ENCODE measurements at regions of chr6 and their contacts with region 1.

Region 1: DNA sequence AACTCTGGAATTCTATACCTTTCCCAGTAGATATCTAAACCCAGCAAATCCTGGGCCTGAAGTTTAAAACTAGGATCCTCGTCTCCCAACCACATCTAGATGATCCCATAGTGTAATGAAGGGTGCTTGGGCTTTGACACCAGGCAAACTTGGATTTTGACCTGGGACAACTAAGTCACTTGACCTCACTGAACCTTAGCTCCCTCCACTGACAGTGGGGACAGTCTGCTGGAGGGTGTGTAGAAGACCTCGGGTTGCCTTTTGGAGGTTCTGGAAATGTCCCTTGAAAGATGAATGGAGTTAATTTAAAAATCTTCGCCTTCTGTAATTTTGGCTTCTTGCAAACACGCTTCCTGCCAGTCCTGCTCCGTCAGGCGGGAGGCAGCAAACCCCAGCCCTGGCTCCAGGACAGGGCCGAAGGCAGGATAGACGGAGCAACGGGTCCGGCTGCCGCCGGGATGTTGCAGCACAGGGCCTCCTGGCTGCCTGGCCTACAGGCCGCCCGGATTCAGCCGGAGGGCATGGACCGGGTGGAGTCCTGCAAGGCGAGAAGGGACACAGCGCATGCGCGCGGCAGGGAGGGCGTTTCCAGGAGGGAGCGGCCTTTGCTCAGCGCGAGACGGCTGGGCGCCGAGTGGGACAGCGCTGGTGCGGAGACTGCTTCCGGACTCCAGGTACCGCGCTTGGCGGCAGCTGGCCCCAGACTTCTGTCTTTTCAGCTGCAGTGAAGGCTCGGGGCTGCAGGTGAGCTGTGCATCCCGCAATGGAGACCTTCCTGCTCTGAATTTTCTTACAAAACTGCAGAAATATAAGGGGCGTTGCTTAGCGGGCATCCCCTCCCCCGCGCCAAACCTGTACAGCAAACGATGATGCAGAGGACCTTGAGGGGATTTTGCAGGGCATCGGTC is at the start of gene TMEM14A:
- DNase-seq: peak; percentile 86 to 97 (median 92)
- H3K4me3 ChIP-seq: peak within 1 kb of the TSS; percentile 53 to 96 (median 77)
- H3K27ac ChIP-seq: peak within 1 kb of the TSS in 55 of 59 donors; percentile 35 to 90 (median 76)
- H3K27me3 ChIP-seq: no peaks in the 10 kb centered on the region
- CTCF ChIP-seq: peak in 42 of 56 donors; percentile 3 to 64 (median 40)
- total RNA-seq, gene TMEM14A: 22.8 to 85.5 (median 63.7) TPM

Region 2: GRCh38 chr6:53064726-53065215 is 394.0 kb after region 1 on chr6:
- intact Hi-C with region 1: loop called in 1 of 2 experiments (anchors 2 kb)
- DNase-seq: peak; percentile 95 to 99 (median 98)
- H3K4me3 ChIP-seq: peak overlapping the region; percentile 66 to 99 (median 93)
- H3K27ac ChIP-seq: peak overlapping the region; percentile 80 to 99 (median 96)
- H3K27me3 ChIP-seq: no peaks in the 10 kb centered on the region
- CTCF ChIP-seq: peak in 37 of 56 donors; percentile 3 to 57 (median 32)

Measured in dorsolateral prefrontal cortex (tissue), 120 donors.